ENCODE measurements at regions of chr16 and their contacts with region 1.

Region 1: GRCh38 chr16:83158320-83158957 is 531.7 kb downstream of the CDH13 start:
- DNase-seq: no peak
- H3K4me3 ChIP-seq: no peak overlapping the region
- H3K27ac ChIP-seq: no peak overlapping the region
- H3K4me1 ChIP-seq: no peaks in the 10 kb centered on the region
- H3K27me3 ChIP-seq: no peaks in the 10 kb centered on the region
- CTCF ChIP-seq: no peak

Region 2: GRCh38 chr16:82782715-82783251 is 375.7 kb before region 1 on chr16:
- CTCF ChIA-PET with region 1: interaction called, 10 read pairs
- dilution Hi-C with region 1: no loop called
- in situ Hi-C with region 1: no loop called
- intact Hi-C with region 1: no loop called
- DNase-seq: no peak
- H3K4me3 ChIP-seq: no peak overlapping the region
- H3K27ac ChIP-seq: no peak overlapping the region
- H3K4me1 ChIP-seq: no peaks in the 10 kb centered on the region
- H3K27me3 ChIP-seq: no peaks in the 10 kb centered on the region
- CTCF ChIP-seq: no peak

Region 3: DNA sequence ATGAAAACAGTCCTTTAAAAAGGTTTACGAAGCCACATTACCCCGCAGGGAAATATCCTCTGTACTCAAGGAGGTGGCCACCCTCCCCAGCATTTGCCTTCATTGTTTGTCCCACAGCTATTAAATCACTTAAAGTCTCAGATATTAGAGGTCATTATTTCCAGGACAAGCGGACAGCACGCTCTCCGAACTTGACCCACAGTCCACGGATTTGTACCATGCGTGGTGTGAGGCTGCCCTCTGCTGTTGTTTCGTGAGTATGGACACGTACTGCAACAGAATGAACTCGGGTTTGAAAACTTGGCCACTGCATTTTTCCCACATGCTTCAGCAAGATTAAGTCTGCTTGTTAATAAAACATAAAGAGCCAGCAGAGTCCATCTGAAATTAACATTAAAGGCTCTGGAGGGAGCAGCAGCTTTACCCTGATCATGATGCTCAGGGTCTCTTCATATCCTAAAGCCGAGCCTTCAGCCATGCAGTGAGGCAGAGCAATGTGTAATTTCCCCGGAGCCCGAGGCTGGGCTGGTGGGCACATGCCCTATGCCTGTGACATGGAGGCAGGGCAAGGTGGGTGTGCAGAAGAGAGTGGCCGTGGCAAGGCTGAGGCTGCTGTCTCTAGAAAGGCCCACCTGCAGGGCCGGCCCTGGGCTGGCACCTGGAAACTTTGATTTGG is 1326.3 kb after region 1 on chr16:
- CTCF ChIA-PET with region 1: no interaction called
- dilution Hi-C with region 1: no loop called
- in situ Hi-C with region 1: no loop called
- intact Hi-C with region 1: no loop called
- DNase-seq: no peak
- H3K4me3 ChIP-seq: no peak overlapping the region
- H3K27ac ChIP-seq: no peak overlapping the region
- H3K4me1 ChIP-seq: peaks cover 11% of the 10 kb centered on the region
- H3K27me3 ChIP-seq: no peaks in the 10 kb centered on the region
- CTCF ChIP-seq: peak; percentile 46 to 67